Posterior vena cava (tissue), 2 donors: ENCODE measurements at regions of chr7 and their contacts with region 1.

Region 1: DNA sequence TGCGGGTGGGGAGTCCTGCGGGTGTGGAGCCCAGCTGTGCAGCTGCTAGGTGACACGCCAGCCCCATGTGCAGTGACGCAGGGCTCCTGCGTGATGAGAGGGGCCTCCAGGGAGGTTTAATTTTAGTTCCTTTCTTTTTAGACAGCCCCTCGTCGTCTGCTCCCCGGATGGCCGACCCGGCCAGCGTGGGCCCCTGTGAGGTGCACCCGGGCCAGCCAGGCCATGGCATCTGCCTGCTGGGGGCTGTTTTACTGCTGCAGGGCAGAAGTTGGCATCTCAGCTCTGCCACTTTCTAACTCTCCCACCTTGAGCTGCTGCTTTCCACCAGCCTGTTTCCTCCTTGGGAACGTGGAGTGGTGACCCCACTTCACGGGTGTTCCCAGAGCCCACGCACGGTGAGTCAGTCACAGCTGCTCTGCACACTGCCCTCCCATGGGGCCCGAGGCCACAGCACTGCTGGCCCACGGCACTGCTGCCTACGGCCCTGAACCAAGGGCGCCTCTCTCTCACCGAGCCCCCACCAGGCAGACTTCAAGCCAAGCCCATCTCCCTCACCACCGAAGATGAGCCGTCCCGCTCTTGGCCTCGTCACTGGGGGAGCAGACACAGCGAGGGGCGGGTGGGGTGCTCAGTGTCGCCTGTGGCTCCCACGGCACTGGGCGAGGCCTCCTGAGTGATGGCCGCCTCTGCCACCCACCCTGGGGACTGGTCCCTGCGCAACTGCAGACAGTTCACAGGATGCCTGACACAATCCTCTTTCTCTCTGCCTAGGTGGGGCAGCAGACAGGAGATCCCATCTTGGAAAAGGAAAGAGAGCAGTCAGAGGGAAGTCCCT is 21.3 kb downstream of the CYP2W1 start:
- DNase-seq: no peak

Region 2: DNA sequence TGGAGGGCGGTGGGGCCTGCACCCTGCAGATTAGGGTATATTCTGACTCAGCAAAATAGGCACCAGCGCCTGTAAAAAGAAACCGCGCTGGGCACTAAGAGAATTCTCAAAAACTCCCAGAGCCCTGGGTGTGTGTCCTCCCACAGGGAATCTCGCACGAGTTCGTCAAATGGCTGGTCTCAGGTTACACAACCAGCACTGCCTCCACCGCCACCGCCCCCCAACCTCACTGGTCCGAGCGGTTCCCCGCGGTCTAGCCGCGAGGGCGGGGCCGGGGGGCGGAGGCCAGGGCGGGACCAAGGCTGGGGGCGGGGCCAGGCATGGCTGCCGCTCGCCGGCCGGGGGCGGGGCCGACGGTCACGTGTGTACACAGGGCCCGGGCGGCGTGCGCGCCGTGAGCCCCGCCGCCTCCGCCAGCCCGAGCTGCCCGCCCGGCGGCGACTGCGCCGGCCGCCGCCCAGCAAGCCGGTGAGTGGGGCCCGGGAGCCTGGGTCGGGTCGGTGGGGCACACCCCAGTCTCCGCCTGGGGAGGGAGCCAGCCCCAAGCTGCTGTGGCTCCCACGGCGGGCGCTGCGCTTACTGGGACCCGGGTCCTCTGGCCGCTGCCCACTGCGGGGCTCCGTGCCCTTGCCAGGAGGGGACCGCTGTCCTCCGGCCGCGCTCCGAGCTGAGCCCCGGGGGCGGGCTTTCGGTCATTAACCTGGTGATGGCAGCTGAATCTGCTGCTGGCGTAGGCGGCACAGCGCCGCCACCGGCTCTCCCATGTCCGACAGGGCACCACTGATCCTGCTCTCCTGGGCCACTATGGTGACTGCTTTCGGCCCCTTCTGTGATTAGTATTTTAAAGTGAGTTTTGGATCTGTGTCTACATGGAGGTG is 40.2 kb after region 1 on chr7 and contains the start of gene GPR146:
- intact Hi-C with region 1: loop called in 1 of 2 experiments (anchors 5 kb)
- DNase-seq: peak; percentile 99
- total RNA-seq, gene GPR146: 9.4 to 14.3 TPM

Region 3: DNA sequence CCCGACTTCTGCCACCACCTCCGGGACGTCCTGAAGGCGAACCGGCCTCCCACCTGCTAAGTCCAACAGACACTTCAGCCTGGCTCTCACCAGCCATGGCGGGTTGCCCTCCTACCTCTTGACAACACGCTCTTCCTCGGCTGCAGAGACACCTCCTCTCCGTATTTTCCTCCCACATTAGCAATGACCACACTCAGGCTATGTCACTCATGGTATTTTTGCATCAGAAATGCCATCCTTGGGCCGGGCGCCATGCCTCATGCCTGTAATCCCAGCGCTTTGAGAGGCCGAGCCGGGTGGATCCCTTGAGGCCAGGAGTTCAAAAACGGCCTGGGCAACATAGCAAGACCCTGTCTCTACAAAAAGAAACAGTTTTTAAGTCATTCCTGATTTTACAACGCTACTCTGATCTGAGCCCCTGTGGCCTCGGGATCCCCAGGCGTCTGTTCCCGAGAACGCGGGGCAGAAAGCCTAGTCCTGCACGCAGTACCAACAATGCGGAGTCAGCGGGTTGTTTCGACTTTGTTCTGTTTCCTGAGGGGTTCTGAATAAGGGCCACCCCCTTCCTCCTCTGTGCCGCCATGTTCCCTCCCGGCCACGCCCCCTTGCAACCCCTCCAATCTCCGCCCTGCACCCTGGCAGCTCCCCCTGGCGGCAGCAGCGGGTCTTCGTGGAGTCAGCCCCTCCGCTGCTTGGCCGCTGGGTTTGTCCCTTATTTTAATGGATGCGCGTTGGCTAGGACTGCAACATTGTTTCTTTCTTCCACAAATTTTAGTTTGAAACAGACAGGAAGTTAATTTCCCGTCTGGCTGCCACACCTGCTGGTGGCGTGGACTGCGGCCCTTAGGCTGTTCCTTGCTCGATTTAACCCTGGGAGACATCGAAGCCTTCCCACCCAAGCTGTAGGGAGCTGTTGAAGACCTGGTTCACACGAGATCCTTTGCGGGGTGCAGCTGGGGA is 165.5 kb after region 1 on chr7:
- intact Hi-C with region 1: loop called in 1 of 2 experiments (anchors 2 kb)
- DNase-seq: peak; percentile 94